ENCODE measurements at regions of chr11 and their contacts with region 1.

Region 1: DNA sequence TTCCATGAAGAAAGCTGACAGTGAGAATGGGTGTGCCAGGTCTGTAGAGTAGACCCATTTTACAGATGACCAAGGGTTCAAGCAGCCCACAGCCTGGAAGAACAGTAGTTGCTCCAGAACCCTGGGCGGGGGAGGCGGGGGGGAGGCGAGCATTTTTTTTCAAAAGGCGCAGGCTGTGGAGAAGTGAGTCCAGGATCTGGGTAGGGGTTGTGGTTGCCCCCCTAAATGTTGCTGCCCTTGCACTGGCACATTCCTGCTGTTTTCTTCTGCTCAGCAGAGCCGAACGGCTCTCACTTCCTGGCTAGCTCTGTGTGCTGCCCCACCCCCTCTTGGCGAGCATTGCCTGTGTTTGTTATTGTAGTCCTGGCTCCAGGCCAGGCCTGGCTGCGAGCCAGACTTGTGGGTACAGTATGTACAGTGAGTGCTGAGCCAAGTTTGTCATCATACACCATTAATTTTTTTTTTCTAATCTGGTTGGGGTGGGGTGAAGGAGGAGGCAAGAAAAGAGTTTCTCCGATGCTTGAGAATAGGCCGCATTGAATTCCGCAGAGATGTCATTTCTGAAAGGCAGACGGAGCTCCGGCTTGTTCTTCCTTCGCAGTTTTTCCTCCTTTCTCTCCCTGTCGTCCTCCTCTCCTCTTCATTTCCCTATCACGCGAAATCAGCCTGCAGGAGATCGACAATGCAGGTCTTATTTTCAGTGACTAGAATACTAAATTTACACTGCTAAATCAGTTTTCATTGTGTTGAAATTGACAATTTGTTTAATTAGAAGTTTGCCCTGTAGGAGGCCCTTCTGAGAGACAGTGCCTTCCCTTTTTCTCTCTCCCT is 100.5 kb downstream of the ZBTB16 start:
- DNase-seq: peak; percentile 96
- H3K4me3 Mint-ChIP-seq: peak overlapping the region; percentile 35
- H3K27ac Mint-ChIP-seq: peak overlapping the region; percentile 47
- H3K4me1 Mint-ChIP-seq: peaks cover 47% of the 10 kb centered on the region
- H3K27me3 Mint-ChIP-seq: no peaks in the 10 kb centered on the region

Region 2: GRCh38 chr11:114017723-114018122 is 142.3 kb before region 1 on chr11:
- CTCF ChIA-PET with region 1: no interaction called
- POLR2A ChIA-PET with region 1: no interaction called
- intact Hi-C with region 1: no loop called
- DNase-seq: no peak
- H3K4me3 Mint-ChIP-seq: no peak overlapping the region
- H3K27ac Mint-ChIP-seq: no peak overlapping the region
- H3K4me1 Mint-ChIP-seq: no peaks in the 10 kb centered on the region
- H3K27me3 Mint-ChIP-seq: no peaks in the 10 kb centered on the region

Region 3: DNA sequence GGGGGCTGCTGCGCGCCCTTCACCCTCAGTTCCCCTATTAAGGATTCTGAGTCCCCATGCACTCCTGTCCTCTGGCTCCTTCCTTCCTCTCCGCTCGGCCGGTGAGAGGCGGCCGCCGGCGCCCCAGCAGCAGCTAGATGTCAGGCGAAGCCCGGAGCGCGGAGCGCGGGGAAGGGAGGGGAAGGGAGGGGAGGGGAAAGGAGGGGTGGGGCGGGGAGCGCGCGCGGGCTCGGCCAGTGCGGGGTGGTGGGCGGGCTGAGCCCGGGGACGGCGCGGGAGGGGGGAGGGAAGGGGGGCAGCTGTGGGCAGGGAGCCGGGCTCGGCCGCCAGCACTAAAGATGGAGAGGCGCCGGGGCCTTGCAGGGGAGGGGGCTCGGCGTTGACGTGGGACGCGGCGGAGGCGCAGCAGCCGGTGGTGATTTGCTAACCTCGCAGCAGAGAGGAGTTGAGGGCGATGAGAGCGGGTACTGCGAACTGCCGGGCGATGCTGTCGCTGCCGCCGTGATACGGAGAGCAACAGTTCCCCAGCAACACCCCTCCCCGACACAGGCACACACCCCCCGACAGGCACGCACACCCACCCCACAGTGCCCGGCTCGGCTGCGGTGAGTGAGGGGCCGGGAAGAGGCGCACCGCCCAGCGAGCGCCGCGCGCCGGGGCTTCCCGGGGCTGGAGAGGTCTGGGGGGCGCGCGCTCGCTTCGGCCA is 100.6 kb before region 1 on chr11 and contains the start of gene ZBTB16:
- CTCF ChIA-PET with region 1: no interaction called
- POLR2A ChIA-PET with region 1: no interaction called
- intact Hi-C with region 1: loop called (anchors 5 kb)
- DNase-seq: peak; percentile 75
- H3K4me3 Mint-ChIP-seq: peak within 1 kb of the TSS; percentile 80
- H3K27ac Mint-ChIP-seq: peak within 1 kb of the TSS; percentile 67
- H3K4me1 Mint-ChIP-seq: peaks cover 6% of the 10 kb centered on the region
- H3K27me3 Mint-ChIP-seq: peaks cover 16% of the 10 kb centered on the region
- total RNA-seq, gene ZBTB16: 7.7 to 9.7 TPM

Region 4: GRCh38 chr11:114075891-114076441 is 84.1 kb before region 1 on chr11:
- CTCF ChIA-PET with region 1: no interaction called
- POLR2A ChIA-PET with region 1: no interaction called
- intact Hi-C with region 1: loop called (anchors 5 kb)
- DNase-seq: peak; percentile 60
- H3K4me3 Mint-ChIP-seq: peak overlapping the region; percentile 20
- H3K27ac Mint-ChIP-seq: peak overlapping the region; percentile 73
- H3K4me1 Mint-ChIP-seq: peaks cover 76% of the 10 kb centered on the region
- H3K27me3 Mint-ChIP-seq: no peaks in the 10 kb centered on the region

Region 5: DNA sequence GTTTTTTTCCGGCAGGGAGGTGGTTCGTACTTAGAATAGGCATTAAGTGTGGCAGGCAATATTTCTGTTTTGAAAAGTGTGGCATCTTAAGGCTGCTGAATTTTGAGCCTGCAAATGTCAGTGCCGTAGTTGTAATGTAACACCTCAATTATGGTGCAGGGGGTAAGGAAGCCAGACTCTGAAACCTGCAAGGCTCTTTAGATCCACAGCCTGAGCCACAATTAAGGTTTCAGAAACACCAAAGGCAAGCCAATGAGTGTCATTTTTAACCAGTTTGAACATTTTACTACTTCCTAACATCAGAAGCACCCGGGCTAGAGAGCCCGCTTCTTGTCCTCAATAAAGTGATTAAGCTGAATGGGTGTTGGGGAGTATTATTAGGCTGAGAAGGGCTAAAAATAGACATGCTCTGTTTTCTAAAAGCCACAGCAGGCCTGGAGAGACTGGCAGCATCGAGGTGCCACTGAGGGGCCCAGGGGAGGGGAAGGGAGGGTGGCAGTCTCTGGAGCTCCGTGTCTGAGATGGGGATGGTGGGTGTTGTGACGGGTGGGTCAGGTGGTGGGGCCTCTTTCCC is 12.9 kb after region 1 on chr11:
- CTCF ChIA-PET with region 1: interaction called, 3 read pairs
- POLR2A ChIA-PET with region 1: no interaction called
- intact Hi-C with region 1: loop called (anchors 1 kb)
- DNase-seq: no peak
- H3K4me3 Mint-ChIP-seq: peak overlapping the region; percentile 40
- H3K27ac Mint-ChIP-seq: peak overlapping the region; percentile 43
- H3K4me1 Mint-ChIP-seq: peaks cover 70% of the 10 kb centered on the region
- H3K27me3 Mint-ChIP-seq: no peaks in the 10 kb centered on the region

Region 6: DNA sequence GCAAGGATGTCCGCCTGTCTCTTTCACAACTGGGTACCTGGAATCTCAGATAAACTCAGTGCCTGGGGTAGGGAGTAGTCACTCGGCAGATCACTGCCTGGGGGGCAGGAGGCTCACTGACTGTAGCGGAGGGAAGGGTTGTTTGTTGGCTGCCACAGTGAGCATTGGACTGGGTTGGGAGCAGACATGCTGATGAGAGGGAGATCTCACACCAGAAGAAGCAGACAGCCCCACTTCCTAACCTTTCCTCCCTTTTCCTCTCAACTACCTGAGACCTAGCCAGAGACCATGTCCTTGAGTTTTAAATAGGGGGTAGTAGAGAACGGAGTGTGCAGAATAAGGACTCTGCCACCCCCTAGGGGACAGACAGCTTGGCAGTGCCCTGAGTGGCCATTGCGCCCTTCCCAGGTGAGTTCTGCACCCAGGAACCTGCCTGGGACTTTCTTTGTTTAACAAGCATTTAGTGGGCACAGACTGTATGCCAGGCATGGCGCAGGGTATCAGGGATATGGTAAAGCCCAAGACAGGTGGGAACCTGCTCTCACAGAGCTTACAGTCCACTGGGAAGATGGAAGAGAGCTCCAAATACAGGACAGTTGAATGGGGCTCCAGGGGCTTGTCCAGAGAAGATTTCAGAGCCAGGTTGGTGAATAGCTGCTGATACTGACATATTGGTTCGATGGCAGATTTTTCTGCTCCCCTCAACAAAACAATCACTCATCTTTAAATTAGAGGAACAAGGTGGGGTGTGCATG is 20.5 kb after region 1 on chr11:
- CTCF ChIA-PET with region 1: interaction called, 5 read pairs
- POLR2A ChIA-PET with region 1: interaction called, 3 read pairs
- intact Hi-C with region 1: loop called (anchors 1 kb)
- DNase-seq: peak; percentile 33
- H3K4me3 Mint-ChIP-seq: no peak overlapping the region
- H3K27ac Mint-ChIP-seq: no peak overlapping the region
- H3K4me1 Mint-ChIP-seq: peaks cover 59% of the 10 kb centered on the region
- H3K27me3 Mint-ChIP-seq: no peaks in the 10 kb centered on the region

Region 7: GRCh38 chr11:114400217-114400914 is 240.3 kb after region 1 on chr11 and contains the starts of genes C11orf71 and RBM7:
- CTCF ChIA-PET with region 1: no interaction called
- POLR2A ChIA-PET with region 1: no interaction called
- intact Hi-C with region 1: loop called (anchors 5 kb)
- DNase-seq: peak; percentile 98
- H3K4me3 Mint-ChIP-seq: peak within 1 kb of the TSS; percentile 97
- H3K27ac Mint-ChIP-seq: peak within 1 kb of the TSS; percentile 99
- H3K4me1 Mint-ChIP-seq: peaks cover 48% of the 10 kb centered on the region
- H3K27me3 Mint-ChIP-seq: no peaks in the 10 kb centered on the region
- total RNA-seq, gene C11orf71: 5.0 to 5.5 TPM
- total RNA-seq, gene RBM7: 44.0 to 45.4 TPM